Activated CD4-positive, alpha-beta T cell treated with anti-CD3 and anti-CD28 coated beads, Interleukin-2, amount 10 ng/mL, durations not matched to agents 24 days and 14 days (primary cell): ENCODE measurements at regions of chr4 and their contacts with region 1.

Region 1: DNA sequence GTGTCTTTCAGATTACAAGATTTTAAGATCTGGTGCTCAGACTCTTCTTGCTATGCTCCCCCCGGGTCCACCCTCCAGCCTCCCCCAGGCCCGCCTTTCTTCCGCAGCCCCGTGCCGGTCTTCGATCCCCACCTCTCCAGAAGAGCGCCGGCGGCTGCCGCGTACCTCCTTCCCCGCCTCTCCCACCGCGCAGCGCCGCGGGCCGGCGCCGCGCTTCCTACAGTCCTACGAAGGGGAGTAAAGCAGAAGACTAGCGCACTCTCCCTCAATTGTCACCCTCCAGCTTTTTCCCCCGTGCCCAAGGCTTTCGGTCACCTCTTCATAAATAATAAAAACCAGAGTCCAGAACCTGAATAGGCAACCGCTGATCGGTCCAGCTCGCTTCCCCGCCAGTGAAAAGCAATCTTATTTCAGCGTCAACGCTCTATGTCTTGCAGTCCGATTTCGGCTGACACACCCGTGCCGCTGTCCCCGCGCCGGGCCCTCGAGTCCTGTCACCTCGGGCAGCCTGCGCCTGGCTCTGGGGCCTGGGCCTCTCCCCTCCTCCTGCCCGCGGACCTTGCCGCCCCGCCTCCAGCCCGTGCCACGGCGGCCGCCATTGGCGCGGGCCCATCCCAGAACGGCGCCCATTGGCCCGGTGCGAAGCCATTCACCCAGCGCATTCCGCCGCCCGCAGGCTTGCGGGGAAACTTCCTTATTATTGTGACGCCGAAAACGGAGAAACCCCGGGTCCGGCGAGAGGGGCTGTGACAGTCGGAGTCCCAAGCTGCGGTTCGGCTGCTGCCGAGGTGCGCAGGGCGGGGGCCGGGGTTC is at the start of gene HERC3:
- DNase-seq: peak; percentile 98
- H3K4me3 Mint-ChIP-seq: peak within 1 kb of the TSS; percentile 90
- H3K27ac Mint-ChIP-seq: peak within 1 kb of the TSS; percentile 85
- H3K4me1 Mint-ChIP-seq: peaks cover 31% of the 10 kb centered on the region
- H3K27me3 Mint-ChIP-seq: peaks cover 17% of the 10 kb centered on the region
- total RNA-seq, gene HERC3: 18.8 and 18.9 TPM in 2 replicates

Region 2: DNA sequence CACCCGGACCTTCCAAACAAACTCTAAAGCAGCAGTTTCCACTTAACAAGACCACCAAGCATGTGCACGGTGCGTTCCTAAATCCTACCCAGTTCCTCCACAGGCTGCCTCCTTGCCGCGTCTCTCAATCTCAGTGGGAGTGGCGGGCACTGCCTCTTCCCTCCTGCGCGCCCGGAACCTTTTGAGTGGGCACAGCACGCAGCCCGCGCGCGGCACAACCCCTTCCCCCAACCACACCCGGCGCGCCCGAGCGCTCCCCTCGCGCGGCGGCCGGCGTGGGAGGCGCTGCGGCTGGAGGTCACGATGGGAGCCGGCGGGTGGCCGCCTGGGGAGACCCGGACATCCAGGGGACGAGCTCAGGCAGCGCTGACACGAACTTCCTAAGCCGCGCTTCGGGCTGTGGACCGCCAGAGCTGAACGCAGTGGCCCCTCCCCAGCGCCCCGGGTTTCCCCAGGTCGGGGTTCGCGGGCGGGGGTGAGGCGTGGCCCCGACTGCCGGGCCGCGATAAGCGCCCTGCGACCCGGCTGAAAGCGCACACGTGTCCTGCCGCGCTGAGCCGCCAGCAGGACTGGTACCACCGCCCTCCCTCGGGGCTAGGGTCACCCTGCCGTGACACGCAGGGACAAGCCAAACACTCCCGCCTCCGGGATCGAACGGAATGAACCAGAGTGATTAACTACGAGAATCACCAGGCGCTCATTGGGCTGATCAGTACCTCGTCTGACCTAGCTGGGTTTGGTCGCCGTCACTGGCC is 433.3 kb before region 1 on chr4 and contains the start of gene ABCG2:
- intact Hi-C with region 1: loop called (anchors 5 kb)
- DNase-seq: peak; percentile 86
- H3K4me3 Mint-ChIP-seq: peak within 1 kb of the TSS; percentile 85
- H3K27ac Mint-ChIP-seq: peak within 1 kb of the TSS; percentile 75
- H3K4me1 Mint-ChIP-seq: peaks cover 14% of the 10 kb centered on the region
- H3K27me3 Mint-ChIP-seq: peaks cover 23% of the 10 kb centered on the region
- total RNA-seq, gene ABCG2: 0.56 and 0.76 TPM in 2 replicates

Region 3: GRCh38 chr4:88523325-88524129 is 68.5 kb before region 1 on chr4 and contains the start of gene PYURF:
- intact Hi-C with region 1: loop called (anchors 1 kb)
- DNase-seq: peak; percentile 94
- H3K4me3 Mint-ChIP-seq: peak within 1 kb of the TSS; percentile 98
- H3K27ac Mint-ChIP-seq: peak within 1 kb of the TSS; percentile 94
- H3K4me1 Mint-ChIP-seq: peaks cover 37% of the 10 kb centered on the region
- H3K27me3 Mint-ChIP-seq: no peaks in the 10 kb centered on the region
- total RNA-seq, gene PYURF: 54.6 and 57.0 TPM in 2 replicates

Region 4: DNA sequence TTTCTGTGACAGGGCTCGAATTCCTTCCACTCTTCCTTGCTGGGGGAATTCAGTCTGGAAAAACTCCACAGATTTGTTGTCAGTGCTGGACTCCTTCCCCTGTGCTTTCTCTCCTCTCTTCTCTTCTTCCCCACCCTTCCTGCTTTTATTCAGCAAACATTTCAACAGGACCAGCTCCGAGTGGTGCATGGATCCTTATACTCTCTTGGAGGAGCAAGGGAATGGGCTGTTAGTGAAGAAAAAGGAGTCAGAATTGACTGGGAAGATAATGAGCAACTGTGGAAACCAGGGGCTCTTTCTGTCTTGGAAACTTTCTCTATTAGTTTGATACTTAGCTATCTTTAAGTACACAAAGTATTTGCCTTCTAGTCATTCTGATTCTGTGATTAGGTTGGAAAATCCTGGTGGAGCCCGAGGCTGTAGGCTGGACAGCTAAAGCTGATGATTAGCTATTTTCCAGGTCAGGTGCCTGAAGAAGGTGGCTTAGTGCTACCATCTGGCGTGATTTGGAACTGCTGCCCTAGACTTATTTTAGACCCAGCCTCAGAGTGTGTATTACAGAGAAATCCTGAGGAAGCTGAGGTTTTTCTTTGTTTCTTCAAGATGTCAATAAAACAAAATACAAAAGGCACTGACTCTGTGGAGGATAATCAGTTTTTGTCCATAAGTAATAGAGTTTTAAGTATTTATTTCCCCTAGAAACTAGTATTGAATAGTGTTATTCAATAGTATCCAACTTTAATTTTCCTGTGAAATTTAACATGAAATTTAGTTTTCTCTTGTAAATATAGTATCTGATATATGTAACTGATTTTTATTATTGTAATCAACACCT is 67.3 kb after region 1 on chr4:
- intact Hi-C with region 1: loop called (anchors 5 kb)
- DNase-seq: peak; percentile 75
- H3K4me3 Mint-ChIP-seq: no peak overlapping the region
- H3K27ac Mint-ChIP-seq: no peak overlapping the region
- H3K4me1 Mint-ChIP-seq: peaks cover 10% of the 10 kb centered on the region
- H3K27me3 Mint-ChIP-seq: no peaks in the 10 kb centered on the region

Region 5: DNA sequence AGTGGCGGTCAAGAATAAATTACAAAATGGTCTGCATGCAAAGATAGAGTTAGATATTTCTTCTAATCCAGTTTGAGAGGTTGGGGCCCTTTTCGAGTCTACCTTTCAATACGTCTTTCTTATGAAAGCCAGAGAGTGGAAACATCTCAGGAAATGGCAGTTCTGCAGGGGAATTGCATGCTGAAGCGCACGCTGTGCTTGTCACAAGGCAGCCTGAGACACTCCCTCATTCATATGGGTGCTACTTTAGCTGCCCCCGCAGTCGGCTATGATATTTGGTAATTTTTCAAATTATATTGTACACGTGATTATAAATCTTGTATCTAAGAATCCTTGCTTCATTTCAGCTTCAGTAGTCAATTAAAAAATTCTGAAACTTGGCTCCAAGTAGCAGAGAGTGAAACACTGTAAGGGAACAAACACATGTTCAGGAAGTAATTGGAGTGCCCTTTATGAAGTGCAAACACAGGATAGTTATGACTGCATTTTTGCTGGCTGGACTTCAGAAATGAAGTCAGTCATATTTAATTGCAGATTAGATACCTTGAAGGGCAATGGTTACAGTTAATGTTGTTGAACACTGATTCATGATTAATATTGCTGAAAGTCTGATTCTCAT is 251.2 kb after region 1 on chr4:
- intact Hi-C with region 1: no loop called
- DNase-seq: no peak
- H3K4me3 Mint-ChIP-seq: no peak overlapping the region
- H3K27ac Mint-ChIP-seq: no peak overlapping the region
- H3K4me1 Mint-ChIP-seq: no peaks in the 10 kb centered on the region
- H3K27me3 Mint-ChIP-seq: peaks cover 22% of the 10 kb centered on the region